Ovary (tissue), 10 donors: ENCODE measurements at regions of chr1 and their contacts with region 1.

Region 1: GRCh38 chr1:155063550-155064110 is at the start of gene EFNA4:
- DNase-seq: peak; percentile 83 to 88 (median 86)
- H3K4me3 ChIP-seq: peak within 1 kb of the TSS; percentile 75
- H3K27ac ChIP-seq: peak within 1 kb of the TSS; percentile 71 to 81
- H3K4me1 ChIP-seq: peaks cover 7% of the 10 kb centered on the region
- H3K27me3 ChIP-seq: no peaks in the 10 kb centered on the region
- CTCF ChIP-seq: no peak
- EP300 ChIP-seq: no peak
- POLR2A ChIP-seq: peak; percentile 45
- total RNA-seq, gene EFNA4: 8.6 to 14.1 (median 12.2) TPM

Region 2: GRCh38 chr1:154784924-154785531 is 278.6 kb before region 1 on chr1:
- intact Hi-C with region 1: loop called in 1 of 4 experiments (anchors 10 kb)
- DNase-seq: no peak
- H3K4me3 ChIP-seq: no peak overlapping the region
- H3K27ac ChIP-seq: no peak overlapping the region
- H3K4me1 ChIP-seq: no peaks in the 10 kb centered on the region
- H3K27me3 ChIP-seq: no peaks in the 10 kb centered on the region
- CTCF ChIP-seq: no peak
- EP300 ChIP-seq: no peak
- POLR2A ChIP-seq: no peak

Region 3: DNA sequence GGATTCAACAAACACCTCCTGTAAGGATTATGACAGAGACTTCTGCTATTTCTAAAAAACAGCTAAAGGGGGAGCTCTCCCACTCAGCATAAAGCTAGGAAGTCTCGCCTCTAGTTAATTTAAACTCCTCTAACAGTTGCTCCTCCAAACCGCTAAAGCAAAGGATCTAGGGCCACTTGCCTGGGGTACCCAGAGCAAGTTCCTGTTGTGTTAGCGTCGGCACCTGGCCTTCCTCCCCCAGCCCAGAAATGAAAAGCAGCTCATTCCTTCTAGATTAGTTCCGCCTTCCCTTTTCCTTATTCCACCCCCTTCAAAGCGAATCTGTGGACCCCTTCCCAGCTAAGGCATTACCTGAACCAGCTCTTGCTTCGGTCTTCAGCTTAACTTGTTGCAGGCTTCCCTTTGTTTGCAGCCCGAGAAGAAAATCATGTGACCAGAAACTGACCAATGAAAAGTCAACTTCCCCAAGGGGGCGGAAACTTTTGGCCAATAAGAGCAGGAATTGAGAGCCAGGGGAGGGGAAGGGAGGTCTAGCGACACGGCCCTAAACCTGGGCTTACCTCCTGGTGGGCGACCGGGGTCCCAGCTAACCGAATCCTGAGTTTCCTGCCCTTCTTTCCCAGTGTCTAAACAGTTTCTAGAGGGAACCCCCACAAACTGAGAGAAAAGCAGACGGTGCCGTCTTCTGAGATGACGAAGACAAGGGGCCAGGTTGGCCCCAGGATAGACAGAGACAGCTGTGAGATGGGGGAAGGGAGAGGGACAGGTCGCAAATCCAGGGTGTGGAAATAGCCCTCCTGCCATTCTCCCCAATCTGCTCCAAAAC is 107.7 kb before region 1 on chr1 and contains the start of gene PBXIP1:
- intact Hi-C with region 1: loop called in 2 of 4 experiments (anchors 5 kb)
- DNase-seq: peak; percentile 70 to 87 (median 75)
- H3K4me3 ChIP-seq: peak within 1 kb of the TSS; percentile 57
- H3K27ac ChIP-seq: peak within 1 kb of the TSS; percentile 52 to 78
- H3K4me1 ChIP-seq: peaks cover 41% of the 10 kb centered on the region
- H3K27me3 ChIP-seq: no peaks in the 10 kb centered on the region
- CTCF ChIP-seq: peak in 2 of 3 donors; percentile 9 to 34
- EP300 ChIP-seq: no peak
- POLR2A ChIP-seq: peak; percentile 30
- total RNA-seq, gene PBXIP1: 78.7 to 170 (median 120) TPM

Region 4: GRCh38 chr1:155084722-155085503 is 21.3 kb after region 1 on chr1:
- intact Hi-C with region 1: loop called in 1 of 4 experiments (anchors 2 kb)
- DNase-seq: peak; percentile 86 to 92 (median 90)
- H3K4me3 ChIP-seq: peak overlapping the region; percentile 61
- H3K27ac ChIP-seq: peak overlapping the region; percentile 66 to 69
- H3K4me1 ChIP-seq: peaks cover 14% of the 10 kb centered on the region
- H3K27me3 ChIP-seq: peaks cover 16% of the 10 kb centered on the region
- CTCF ChIP-seq: peak; percentile 92 to 98 (median 97)
- EP300 ChIP-seq: no peak
- POLR2A ChIP-seq: peak; percentile 10

Region 5: DNA sequence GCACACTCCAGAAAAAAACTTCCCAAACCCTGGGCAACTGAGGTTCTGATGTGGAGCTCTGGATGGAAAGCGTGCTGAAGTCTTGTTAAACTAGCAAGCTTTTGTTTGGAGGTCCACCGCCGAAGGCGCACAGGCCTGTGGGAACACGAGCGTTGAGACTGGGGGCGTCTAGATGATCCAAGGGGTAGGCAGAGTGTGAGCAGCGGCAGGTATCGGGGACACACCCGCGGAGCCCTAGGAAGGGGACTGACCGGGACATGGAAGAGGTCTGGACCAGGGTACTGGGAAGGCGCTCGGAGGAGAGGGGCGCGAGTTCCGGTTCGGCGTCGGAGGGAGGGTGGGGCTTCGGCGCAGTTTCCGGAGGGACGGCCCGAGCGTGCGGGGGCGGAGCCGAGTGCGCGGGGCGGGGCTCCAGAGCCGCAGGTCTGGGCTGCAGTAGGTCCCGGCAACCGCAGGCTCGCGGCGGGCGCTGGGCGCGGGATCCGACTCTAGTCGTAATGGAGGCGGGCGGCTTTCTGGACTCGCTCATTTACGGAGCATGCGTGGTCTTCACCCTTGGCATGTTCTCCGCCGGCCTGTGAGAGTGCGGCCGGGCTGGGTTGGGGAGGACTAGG is 71.9 kb after region 1 on chr1 and contains the start of gene SLC50A1:
- intact Hi-C with region 1: no loop called
- DNase-seq: peak; percentile 94 to 98 (median 95)
- H3K4me3 ChIP-seq: peak within 1 kb of the TSS; percentile 72
- H3K27ac ChIP-seq: peak within 1 kb of the TSS; percentile 87 to 99
- H3K4me1 ChIP-seq: peaks cover 5% of the 10 kb centered on the region
- H3K27me3 ChIP-seq: no peaks in the 10 kb centered on the region
- CTCF ChIP-seq: peak; percentile 42 to 86 (median 72)
- EP300 ChIP-seq: no peak
- POLR2A ChIP-seq: peak; percentile 94
- total RNA-seq, gene SLC50A1: 10.8 to 31.4 (median 16.8) TPM